ENCODE measurements at regions of chr5 and their contacts with region 1.

Region 1: DNA sequence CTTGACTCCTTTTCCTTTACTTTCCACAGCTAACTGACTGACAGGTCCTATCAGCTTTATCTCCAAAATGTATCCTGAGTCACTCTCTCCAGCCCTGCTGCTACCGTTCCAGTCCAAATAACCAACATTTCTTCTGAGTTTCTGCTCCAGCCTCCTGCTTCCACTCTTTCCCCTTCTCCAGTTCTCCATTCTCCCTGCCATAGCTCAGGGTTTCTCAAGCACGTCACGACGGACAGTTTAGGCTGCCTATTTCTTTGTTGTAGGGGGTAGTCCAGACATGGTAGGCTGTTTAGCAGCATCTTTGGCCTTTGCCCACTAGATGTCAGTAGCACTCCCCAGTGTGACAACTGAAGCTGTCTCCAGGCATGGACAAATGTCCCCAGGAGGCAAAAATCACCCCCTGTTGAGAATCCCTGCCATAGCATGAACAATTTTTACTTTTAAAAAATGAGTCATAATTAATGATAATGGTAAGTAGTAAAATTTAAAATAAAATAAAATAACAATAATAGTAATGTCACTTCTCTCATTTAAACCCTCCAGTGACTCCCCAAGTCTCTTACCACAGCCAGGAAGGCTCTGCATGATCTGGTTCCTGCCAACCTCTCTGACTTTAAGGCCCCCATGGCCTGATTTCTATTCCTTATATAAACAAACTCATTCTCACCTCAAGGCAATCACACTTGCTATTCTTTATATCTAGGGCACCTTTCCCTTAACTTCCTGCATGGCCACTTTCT is 105.4 kb upstream of the FER start:
- DNase-seq: no peak

Region 2: DNA sequence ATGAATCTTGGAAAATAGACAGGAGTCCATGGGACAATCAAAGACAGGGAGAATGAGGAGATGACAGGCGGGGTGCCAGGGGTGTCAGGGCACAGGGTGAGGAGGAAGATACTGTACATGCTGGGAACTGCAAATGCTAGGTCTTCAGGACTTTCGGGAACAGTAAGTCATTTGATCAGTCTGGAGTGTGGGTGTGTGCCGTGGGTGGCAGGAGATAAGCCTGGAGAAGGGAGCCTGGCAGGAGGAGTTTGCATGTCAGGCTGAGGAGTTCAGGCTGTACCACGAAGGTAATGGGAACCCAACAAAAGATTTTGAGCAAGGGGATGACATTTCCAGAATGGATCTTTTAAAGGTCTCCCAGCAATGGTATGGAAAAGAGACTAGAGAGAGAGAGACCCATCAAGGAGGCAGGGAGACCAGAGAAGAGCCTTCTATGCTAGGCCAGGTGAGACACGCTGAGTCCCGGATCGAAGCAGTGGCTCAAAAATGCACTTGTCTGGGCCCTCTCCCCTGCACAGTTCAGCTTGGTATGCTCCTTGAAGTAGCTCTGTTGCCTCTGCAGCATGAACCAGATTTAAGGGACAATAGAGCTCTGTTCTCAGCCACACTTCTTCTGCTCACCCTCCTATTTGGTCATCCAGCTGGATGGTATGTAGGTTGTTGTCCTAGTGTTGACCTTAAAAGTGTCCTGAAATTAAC is 28.4 kb after region 1 on chr5:
- intact Hi-C with region 1: no loop called
- DNase-seq: no peak

Region 3: GRCh38 chr5:109468737-109469420 is 826.5 kb after region 1 on chr5:
- intact Hi-C with region 1: loop called (anchors 5 kb)
- DNase-seq: peak; percentile 96